Cardiac septum (tissue), 1 donor: ENCODE measurements at regions of chr9 and their contacts with region 1.

Region 1: DNA sequence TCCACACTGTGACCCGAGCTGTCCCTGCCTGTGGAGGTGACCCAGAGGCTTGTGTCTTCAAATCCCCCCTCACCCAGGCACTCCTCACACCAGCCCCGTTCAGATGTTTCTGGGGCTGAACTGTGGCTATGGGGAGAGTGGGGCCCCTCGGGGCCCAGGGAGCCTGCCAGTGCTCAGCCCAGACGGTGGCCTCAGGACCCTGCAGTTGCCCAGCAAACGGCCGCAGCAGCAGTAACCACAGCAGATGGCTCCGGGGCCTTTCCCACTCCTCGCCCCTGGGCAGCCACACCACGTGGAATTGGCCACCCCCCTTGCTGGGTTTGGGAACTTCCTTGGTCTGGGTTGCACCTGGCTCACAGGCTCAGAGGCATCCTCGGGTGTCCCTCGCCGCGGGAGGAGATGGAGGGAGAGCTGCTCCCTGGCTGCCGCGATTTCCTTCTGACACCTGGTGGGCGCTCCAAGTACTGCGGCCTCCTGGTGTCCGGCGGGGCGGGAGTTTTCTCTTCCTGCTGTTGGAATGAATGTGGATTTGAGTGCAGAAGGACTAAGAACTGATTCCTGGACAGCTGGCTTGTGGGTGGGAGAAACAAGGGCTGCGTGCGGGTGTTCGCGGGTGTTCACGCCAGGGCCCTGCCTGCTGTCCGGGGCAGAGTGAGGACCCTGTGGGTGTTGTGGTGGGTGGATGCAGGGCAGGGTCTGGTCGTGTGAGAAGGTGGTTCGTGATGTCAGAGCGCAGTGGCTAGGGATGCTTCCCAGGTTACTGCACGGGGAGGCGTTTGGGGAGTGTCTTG is 97.5 kb downstream of the COL5A1 start:
- DNase-seq: no peak

Region 2: DNA sequence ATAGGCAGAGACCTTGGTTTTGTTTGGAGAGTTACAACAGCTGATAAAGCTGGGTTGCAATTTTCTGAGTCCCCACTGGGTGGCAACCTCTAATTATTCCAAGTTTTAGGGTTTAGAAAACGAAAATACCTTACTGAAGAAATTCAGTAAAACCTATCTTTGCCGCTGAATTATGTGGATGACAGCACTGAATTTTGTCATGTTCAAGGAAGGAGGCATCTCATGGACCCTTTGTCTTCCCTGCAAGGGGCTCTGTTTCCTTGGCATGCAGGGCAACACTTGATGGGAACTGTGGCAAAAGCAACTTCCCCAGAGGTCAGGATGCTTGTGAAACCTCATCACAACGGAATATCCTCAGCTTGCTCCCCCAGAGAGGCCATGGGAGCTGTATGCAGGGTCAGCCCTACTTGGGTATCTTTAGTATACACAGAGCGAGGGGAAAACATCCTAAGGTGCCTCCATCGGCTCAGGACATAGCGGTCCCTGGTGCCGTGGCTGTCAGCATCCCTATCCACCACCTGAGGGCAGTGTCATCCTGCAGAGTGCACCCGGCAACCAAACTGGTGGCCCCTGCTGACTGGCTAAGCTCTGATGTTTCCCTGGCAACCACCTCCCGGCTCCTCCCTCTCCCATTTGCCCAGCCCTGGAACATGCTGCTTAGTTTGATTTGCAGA is 289.7 kb before region 1 on chr9:
- intact Hi-C with region 1: loop called (anchors 1 kb)
- DNase-seq: peak; percentile 92

Region 3: GRCh38 chr9:134698587-134699342 is 40.3 kb before region 1 on chr9:
- intact Hi-C with region 1: loop called (anchors 2 kb)
- DNase-seq: peak; percentile 85